Esophagus squamous epithelium (tissue), 5 donors: ENCODE measurements at regions of chr19 and their contacts with region 1.

Region 1: GRCh38 chr19:35716801-35717666 is 769 bp upstream of the KMT2B start:
- DNase-seq: peak; percentile 82
- H3K4me3 ChIP-seq: peak overlapping the region; percentile 75 to 98 (median 94)
- H3K27ac ChIP-seq: peak overlapping the region; percentile 86 to 98 (median 94)
- H3K4me1 ChIP-seq: peaks cover 24 to 41% (median 25%) of the 10 kb centered on the region in 3 donors
- H3K27me3 ChIP-seq: no peaks in the 10 kb centered on the region
- CTCF ChIP-seq: peak; percentile 88 to 96 (median 92)
- POLR2A ChIP-seq: peak in 1 of 4 donors; percentile 41

Region 2: DNA sequence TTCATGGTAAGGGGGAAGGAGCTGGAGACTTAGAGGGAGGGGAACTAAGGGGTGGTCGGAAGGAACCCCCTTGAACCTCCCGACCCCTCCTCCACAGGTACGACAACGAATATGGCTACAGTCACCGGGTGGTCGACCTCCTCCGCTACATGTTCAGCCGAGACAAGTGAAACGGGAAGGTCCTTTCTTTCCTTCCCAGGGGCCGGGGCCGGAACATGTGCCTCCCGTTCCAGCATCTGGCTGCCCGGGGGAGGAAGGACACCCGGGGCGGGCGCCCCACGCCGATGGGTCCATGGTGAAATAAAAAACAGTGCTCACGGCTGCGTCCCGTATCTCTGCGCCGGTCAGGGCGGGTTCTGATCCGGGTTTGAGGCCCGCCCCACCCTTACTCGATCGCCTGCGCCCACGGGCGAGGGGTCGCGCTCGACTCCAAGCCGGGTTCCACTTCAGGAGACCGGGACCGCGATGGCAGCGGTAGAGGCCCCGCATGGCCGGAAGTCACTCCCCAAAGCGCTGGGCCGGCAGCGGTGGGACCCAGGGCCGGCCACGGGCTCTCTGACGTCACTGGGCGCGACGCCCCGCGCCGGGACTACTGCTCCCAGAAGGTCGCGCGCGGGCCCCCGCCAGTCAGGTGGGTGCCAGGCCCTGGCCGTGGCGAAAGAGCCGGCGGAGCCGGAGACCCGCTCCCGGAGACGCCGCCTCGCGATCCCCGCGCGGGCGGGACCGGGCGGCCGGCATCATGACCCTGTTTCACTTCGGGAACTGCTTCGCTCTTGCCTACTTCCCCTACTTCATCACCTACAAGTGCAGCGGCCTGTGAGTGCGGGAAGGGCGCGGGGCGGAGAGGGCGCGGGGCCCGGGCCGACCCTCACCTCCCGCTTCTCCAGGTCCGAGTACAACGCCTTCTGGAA is 171.8 kb before region 1 on chr19 and contains the start of gene TMEM147:
- intact Hi-C with region 1: loop called (anchors 10 kb)
- DNase-seq: peak; percentile 44
- H3K4me3 ChIP-seq: peak within 1 kb of the TSS; percentile 63 to 88 (median 82)
- H3K27ac ChIP-seq: peak within 1 kb of the TSS; percentile 85 to 92 (median 86)
- H3K4me1 ChIP-seq: peaks cover 18 to 47% (median 19%) of the 10 kb centered on the region in 3 donors
- H3K27me3 ChIP-seq: no peaks in the 10 kb centered on the region
- CTCF ChIP-seq: peak in 2 of 6 experiments; percentile 18 to 21
- POLR2A ChIP-seq: peak in 2 of 4 donors; percentile 57 to 66
- total RNA-seq, gene TMEM147: 68.1 to 119 (median 89.6) TPM

Region 3: GRCh38 chr19:35693830-35694599 is 23.0 kb before region 1 on chr19:
- intact Hi-C with region 1: loop called (anchors 2 kb)
- DNase-seq: peak; percentile 51
- H3K4me3 ChIP-seq: no peak overlapping the region
- H3K27ac ChIP-seq: no peak overlapping the region
- H3K4me1 ChIP-seq: peaks cover 0 to 10% (median 0%) of the 10 kb centered on the region in 3 donors
- H3K27me3 ChIP-seq: no peaks in the 10 kb centered on the region
- CTCF ChIP-seq: peak; percentile 97 to 99 (median 98)
- POLR2A ChIP-seq: no peak